ENCODE measurements at regions of chr11 and their contacts with region 1.

Region 1: DNA sequence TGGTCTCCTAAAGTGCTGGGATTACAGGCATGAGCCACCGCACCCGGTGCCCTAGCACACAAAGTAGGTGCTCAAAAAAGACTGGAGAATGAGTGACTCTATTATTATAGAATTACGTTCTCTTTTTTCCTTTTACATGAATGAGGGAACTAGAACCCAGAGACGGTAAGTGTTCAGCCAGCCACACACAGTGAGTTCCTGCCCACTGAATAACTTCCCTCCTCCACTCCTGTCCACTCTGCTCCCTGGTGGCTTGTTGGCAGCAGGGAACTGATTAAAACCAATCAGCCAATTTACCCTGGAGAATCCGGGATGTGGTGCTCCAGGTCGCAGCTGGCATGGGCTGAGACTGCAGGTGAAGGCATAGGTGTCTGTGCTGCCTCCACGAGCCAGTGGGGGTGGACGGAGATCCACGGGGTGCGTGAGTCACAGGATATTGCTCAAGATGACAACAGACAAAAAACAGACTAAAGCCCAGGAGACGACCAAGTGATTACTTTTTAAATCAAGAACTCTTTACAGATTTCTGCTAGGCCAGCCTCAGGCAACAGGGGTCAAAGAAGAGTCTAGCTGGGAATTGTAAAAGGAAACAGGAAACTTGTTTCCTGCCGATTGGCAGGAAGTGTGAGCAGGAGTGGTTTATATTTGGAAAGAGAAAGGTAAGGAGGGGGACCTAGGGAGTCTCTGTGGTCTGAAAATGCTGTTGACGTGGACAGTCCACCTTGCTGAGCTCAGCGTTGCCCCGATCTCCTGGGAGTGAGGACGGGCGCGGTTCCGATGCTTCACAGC is 95.2 kb upstream of the TP53I11 start:
- DNase-seq: peak; percentile 78
- H3K4me3 Mint-ChIP-seq: peak overlapping the region; percentile 54
- H3K27ac Mint-ChIP-seq: peak overlapping the region; percentile 98
- H3K4me1 Mint-ChIP-seq: peaks cover 41% of the 10 kb centered on the region
- H3K27me3 Mint-ChIP-seq: no peaks in the 10 kb centered on the region
- CTCF ChIP-seq: no peak

Region 2: DNA sequence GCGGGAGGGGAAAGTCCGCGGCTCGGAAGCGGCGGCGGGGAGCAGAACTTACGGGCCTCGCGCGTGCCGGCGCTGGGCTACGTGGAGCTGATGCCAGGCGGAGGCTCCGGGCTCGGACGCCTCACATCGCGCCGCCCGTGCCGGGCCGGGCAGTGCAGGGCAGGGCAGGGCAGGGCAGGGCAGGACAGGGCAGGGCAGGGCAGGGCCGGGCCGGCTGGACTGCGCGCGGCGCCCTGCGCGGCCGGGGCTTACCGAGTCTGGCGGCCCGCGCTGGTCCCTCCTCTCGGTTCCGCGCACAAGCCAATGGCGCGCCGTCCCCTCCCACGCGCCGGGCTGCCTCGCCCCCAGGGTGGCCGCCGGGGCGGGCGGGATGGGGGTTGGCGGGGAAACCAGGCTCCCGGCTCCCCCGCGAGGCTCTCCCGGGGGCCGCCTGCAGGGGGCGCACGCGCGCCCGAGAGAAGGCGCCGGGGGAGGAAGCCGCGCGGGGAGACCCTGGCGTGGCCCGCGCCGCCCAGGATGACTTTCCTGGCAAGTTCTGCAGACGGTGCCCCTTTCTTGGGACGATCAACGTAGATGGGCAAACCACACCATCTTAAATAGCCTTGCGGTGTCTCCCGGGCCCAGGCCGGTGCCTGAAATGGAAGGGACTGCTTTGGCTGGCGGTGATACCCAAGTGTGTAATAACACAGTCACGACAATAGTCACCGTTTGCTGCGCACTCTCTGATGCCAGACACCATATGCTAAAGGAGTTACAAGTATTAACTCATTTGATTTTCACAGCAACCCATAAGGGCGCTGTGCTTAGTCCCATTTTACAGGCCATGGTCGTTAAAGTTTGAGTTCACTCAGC is 95.0 kb before region 1 on chr11 and contains the start of gene TP53I11:
- CTCF ChIA-PET with region 1: interaction called, 3 read pairs
- POLR2A ChIA-PET with region 1: no interaction called
- intact Hi-C with region 1: loop called (anchors 10 kb)
- DNase-seq: peak; percentile 51
- H3K4me3 Mint-ChIP-seq: peak within 1 kb of the TSS; percentile 68
- H3K27ac Mint-ChIP-seq: no peak within 1 kb of the TSS
- H3K4me1 Mint-ChIP-seq: peaks cover 9% of the 10 kb centered on the region
- H3K27me3 Mint-ChIP-seq: no peaks in the 10 kb centered on the region
- CTCF ChIP-seq: peak; percentile 83
- total RNA-seq, gene TP53I11: 14.8 and 17.7 TPM in 2 replicates

Region 3: DNA sequence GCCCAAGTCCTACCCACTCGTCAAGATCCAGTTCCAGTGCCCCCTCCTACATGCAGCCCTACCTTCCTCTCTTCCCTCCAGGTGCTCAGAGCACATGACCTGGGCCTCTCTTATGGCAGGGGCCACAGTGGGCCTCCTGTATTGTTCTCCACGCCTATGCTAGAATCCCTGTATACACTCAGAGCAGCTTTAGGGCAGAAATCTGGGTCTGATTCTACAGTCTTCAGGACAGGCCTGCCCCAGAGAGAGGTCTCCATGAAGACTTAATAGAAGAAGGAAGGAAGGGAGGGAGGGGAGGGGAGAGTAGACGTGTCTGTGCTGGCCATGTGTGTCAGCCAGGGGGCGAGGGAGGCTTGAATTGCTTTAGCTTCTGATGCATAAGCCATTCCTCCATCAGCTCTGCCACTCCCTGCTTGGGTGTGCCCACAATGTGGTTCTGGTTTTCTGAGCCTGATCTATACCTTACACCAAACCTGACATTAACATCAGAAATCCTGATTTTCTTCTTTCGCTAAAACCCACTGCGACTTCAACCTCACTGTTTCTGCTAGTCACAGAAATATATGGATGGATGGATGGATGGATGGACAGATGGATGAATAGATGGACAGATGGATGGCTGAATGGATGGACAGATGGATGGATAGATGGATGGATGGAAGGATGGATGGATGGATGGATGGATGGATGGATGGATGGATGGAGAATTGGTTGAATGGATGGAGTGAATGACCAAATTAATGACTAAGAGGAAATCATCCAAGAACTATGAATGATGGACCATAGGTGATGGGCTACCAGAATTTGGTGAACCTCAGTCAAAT is 44.0 kb after region 1 on chr11:
- CTCF ChIA-PET with region 1: interaction called, 4 read pairs
- POLR2A ChIA-PET with region 1: interaction called, 3 read pairs
- intact Hi-C with region 1: loop called (anchors 1 kb)
- DNase-seq: peak; percentile 46
- H3K4me3 Mint-ChIP-seq: peak overlapping the region; percentile 35
- H3K27ac Mint-ChIP-seq: peak overlapping the region; percentile 89
- H3K4me1 Mint-ChIP-seq: peaks cover 41% of the 10 kb centered on the region
- H3K27me3 Mint-ChIP-seq: no peaks in the 10 kb centered on the region
- CTCF ChIP-seq: no peak

Region 4: DNA sequence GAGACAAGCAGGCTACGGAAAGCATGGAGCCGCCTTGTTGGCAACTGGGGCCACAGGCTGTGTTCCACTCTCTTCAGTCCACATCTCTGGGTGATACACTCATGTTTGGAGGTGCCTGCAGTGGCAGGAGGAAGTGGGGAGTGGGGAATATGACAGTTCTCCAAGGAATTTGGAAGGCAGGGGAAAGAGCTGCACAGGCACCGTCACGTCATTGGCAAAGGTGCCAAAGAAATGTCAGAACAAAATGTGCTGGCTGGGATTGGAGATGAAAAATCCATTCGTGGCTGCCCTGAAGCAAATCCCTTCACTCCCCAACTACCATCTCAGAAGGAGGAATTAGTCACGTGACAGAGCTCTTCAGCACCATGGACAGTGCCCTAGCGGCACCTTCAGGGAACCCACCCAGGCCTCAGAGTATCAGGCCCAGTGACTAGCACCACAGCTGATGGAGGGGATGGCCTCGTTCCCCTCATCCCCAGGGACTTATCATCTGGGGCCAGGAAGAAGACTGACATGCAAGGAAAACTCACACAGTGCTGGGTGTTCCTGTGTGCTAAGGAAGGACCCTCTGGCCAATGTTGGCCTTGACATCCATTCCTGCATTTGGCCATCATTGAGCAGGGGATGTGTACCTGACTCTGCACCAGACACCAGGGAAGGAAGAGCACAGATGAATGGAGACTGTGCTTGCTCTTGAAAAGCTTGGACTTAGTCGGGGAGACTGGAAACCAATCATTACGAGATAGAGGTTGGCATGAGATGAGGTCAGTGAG is 52.0 kb after region 1 on chr11:
- CTCF ChIA-PET with region 1: interaction called, 9 read pairs
- POLR2A ChIA-PET with region 1: interaction called, 12 read pairs
- intact Hi-C with region 1: no loop called
- DNase-seq: peak; percentile 80
- H3K4me3 Mint-ChIP-seq: no peak overlapping the region
- H3K27ac Mint-ChIP-seq: no peak overlapping the region
- H3K4me1 Mint-ChIP-seq: peaks cover 42% of the 10 kb centered on the region
- H3K27me3 Mint-ChIP-seq: no peaks in the 10 kb centered on the region
- CTCF ChIP-seq: no peak

Measured in MCF 10A (cell line).